ENCODE measurements at regions of chr11 and their contacts with region 1.

Region 1: GRCh38 chr11:13335319-13335718 is 57.7 kb downstream of the BMAL1 start:
- DNase-seq: peak; percentile 88
- ATAC-seq: peak; percentile 34
- H3K4me3 Mint-ChIP-seq: no peak overlapping the region
- H3K27ac Mint-ChIP-seq: peak overlapping the region; percentile 1
- H3K4me1 Mint-ChIP-seq: peaks cover 73% of the 10 kb centered on the region
- H3K27me3 Mint-ChIP-seq: no peaks in the 10 kb centered on the region
- CTCF ChIP-seq: peak; percentile 76

Region 2: GRCh38 chr11:13238879-13239514 is 96.3 kb before region 1 on chr11:
- CTCF ChIA-PET with region 1: interaction called, 17 read pairs
- POLR2A ChIA-PET with region 1: no interaction called
- intact Hi-C with region 1: no loop called
- DNase-seq: peak; percentile 65
- ATAC-seq: peak; percentile 64
- H3K4me3 Mint-ChIP-seq: no peak overlapping the region
- H3K27ac Mint-ChIP-seq: no peak overlapping the region
- H3K4me1 Mint-ChIP-seq: peaks cover 2% of the 10 kb centered on the region
- H3K27me3 Mint-ChIP-seq: peaks cover 13% of the 10 kb centered on the region
- CTCF ChIP-seq: peak; percentile 95

Region 3: DNA sequence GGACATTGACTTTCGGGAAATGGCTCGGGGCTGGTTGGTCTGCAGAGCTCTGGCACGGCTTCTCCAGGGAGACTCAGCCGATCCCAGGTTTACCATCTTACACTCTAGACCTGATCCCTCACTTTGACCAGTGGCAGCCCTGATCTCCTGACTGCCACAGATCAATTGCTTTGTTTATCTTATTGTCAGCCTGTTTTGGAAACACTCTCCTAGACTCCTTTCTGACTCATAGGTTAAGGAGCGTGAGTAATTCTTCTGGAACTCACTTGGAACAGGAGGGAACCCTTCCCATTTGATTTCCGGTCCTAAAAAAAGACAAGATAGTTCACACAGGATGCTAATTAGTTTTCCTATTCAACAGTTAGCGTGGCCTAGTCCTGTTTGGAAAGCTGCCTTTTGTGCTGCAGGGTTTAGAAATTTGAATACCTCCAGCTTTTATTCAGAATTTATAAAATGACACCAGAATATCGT is 73.7 kb before region 1 on chr11:
- CTCF ChIA-PET with region 1: interaction called, 25 read pairs
- POLR2A ChIA-PET with region 1: no interaction called
- intact Hi-C with region 1: loop called (anchors 10 kb)
- DNase-seq: no peak
- ATAC-seq: no peak
- H3K4me3 Mint-ChIP-seq: no peak overlapping the region
- H3K27ac Mint-ChIP-seq: no peak overlapping the region
- H3K4me1 Mint-ChIP-seq: peaks cover 3% of the 10 kb centered on the region
- H3K27me3 Mint-ChIP-seq: peaks cover 2% of the 10 kb centered on the region
- CTCF ChIP-seq: no peak

Region 4: DNA sequence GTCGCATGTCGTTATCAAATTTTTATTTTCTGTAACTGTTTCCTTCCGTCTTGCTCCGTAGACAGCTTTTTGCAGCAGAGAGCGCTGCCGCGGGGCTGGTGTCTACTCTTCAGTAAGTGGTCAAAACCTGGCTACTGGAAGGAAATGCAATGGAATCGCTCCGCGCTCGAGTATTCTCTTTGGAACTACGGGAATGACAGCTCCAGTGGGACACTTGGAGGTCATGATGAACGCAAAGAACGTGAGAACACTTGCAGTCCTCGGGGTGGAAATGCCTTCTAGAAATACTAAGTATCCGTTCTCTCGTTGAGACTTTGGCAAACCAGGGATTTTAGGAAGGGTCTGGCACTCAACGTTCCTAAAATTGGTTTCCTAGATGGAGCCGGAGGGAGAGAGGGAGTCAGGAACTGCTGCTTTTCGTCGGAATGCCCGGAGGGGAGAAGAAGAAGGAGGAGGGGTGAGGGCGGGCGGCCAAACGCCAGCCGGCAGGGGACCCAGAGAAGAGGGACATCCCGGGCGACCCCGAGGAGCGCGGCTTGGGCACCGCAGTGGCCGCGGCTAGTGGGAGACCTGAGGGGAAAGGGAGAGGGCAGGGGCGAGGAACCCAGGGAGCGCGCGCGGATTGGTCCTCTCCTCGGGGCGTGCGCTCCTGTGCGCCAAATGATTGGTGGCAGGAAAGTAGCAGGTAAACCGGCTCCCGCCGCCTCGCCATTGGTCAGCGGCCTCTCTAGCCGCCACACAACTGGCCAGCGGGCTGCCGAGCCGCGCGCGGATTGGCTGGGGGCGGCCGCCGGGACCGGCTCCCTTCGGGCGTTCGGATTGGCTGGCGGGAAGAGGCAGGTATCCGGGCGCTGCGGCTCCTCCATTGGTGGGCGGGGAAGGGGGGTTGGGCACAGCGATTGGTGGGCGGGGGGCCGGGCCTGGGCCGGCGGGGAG is 58.2 kb before region 1 on chr11:
- CTCF ChIA-PET with region 1: interaction called, 34 read pairs
- POLR2A ChIA-PET with region 1: interaction called, 12 read pairs
- intact Hi-C with region 1: no loop called
- DNase-seq: peak; percentile 95
- ATAC-seq: peak; percentile 88
- H3K4me3 Mint-ChIP-seq: peak overlapping the region; percentile 93
- H3K27ac Mint-ChIP-seq: peak overlapping the region; percentile 85
- H3K4me1 Mint-ChIP-seq: peaks cover 43% of the 10 kb centered on the region
- H3K27me3 Mint-ChIP-seq: peaks cover 6% of the 10 kb centered on the region
- CTCF ChIP-seq: no peak

Region 5: GRCh38 chr11:13297917-13298356 is 37.4 kb before region 1 on chr11:
- CTCF ChIA-PET with region 1: interaction called, 18 read pairs
- POLR2A ChIA-PET with region 1: no interaction called
- intact Hi-C with region 1: no loop called
- DNase-seq: peak; percentile 73
- ATAC-seq: peak; percentile 94
- H3K4me3 Mint-ChIP-seq: no peak overlapping the region
- H3K27ac Mint-ChIP-seq: peak overlapping the region; percentile 80
- H3K4me1 Mint-ChIP-seq: peaks cover 60% of the 10 kb centered on the region
- H3K27me3 Mint-ChIP-seq: no peaks in the 10 kb centered on the region
- CTCF ChIP-seq: no peak

Region 6: DNA sequence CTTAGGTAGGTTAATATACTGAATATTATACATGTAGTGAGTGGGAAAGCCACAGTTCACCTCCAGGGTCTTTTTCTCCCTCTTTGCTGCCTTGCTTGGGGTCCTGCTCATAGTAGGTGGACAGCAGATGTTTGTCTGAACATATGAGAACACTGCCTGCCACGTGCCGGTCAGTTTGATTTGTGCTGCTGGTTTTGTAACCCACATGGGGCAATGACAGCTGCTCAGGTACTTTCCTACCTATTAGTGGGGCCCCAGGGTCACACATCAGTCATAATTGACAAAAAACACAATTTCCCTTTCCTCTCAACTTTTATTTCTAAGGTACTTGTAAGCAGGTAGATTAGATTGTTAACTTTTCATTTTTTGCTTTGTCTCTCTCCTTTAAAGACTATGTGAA is 13.9 kb before region 1 on chr11:
- CTCF ChIA-PET with region 1: interaction called, 15 read pairs
- POLR2A ChIA-PET with region 1: interaction called, 4 read pairs
- intact Hi-C with region 1: no loop called
- DNase-seq: no peak
- ATAC-seq: no peak
- H3K4me3 Mint-ChIP-seq: no peak overlapping the region
- H3K27ac Mint-ChIP-seq: peak overlapping the region; percentile 6
- H3K4me1 Mint-ChIP-seq: peaks cover 54% of the 10 kb centered on the region
- H3K27me3 Mint-ChIP-seq: no peaks in the 10 kb centered on the region
- CTCF ChIP-seq: no peak